ENCODE measurements at regions of chr11 and their contacts with region 1.

Region 1: DNA sequence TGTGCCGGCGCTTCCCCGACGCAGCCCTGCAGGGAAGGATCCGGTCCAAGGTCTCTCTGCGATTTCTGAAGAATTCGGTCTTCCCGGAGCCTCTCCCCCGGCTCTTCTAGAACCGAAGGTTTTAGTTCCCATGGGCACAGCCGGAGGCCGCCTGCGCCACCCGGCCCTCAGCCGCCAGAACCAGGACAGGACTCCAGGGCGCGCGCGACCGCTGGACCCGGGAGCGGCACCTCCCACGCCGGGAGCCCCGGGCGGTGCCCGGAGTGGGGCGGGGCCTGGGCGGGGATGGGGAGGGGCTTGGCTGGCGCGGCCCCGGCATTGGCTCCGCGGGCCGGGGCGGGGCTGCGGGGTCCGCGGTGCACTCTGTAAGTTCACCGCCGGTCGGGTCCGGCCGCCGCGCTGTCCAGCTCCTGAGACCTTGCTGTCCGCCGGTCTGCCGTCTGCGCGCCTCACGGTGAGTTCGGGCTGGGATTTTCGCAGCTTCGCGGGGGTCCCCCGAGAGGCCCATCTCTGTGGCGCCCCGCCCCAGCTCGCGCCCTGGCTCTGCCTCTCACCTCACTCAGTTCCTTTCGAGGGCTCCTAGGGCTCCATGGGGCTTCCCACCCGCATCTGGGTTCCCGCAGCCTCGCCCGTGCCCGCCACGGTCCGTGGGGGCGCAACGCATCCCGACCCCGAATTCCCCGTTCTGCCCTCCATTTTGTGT is at the start of gene CDC42EP2:
- DNase-seq: peak; percentile 85 to 97 (median 93)
- ATAC-seq: peak; percentile 90 to 98 (median 94)
- H3K4me3 ChIP-seq: peak within 1 kb of the TSS; percentile 57 to 92 (median 84)
- H3K27ac ChIP-seq: peak within 1 kb of the TSS; percentile 60 to 90 (median 77)
- H3K4me1 ChIP-seq: peaks cover 0 to 18% (median 3%) of the 10 kb centered on the region in 3 donors
- H3K27me3 ChIP-seq: no peaks in the 10 kb centered on the region
- CTCF ChIP-seq: no peak
- total RNA-seq, gene CDC42EP2: 2.4 to 7.9 (median 2.7) TPM

Region 2: GRCh38 chr11:65274735-65275682 is 39.6 kb before region 1 on chr11:
- intact Hi-C with region 1: loop called in 2 of 3 experiments (anchors 2 to 5 kb)
- DNase-seq: peak in 4 of 6 donors; percentile 72 to 83 (median 76)
- ATAC-seq: peak; percentile 81 to 90 (median 86)
- H3K4me3 ChIP-seq: no peak overlapping the region
- H3K27ac ChIP-seq: peak overlapping the region; percentile 38 to 78 (median 60)
- H3K4me1 ChIP-seq: peaks cover 10 to 56% (median 24%) of the 10 kb centered on the region in 3 donors
- H3K27me3 ChIP-seq: no peaks in the 10 kb centered on the region
- CTCF ChIP-seq: peak; percentile 51 to 61 (median 59)

Measured in pancreas (tissue), 10 donors.